SK-N-SH (cell line): ENCODE measurements at regions of chr16 and their contacts with region 1.

Region 1: DNA sequence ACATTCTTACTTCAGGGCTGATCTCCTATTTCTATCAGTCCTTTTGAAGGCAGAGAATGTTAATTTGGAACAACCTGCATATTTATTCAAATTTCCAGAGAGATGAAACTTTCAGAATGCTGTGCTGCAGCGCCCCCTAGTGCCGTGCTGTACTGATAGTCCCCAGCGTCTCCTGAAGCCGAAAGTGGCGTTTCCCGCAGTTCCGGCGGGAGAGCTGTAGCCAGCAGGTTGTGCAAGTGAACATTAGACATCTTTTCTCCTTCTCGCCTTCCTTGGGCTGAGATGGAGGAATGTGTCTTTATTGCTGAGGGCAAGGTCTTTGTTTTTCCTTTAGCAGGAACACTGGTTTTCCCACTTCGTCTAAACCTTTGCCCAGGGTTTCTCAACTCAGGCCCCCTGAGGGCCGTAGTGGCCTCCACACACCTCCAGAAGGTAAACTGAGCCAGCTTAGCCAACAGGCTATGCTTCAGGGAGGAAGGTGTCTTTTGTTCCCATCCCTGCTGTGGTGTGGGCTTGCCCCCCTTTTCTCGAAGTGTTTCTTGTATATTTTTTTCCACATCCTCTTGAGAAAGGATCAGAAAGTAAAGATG is 26.4 kb downstream of the USP10 start:
- DNase-seq: peak; percentile 68
- H3K4me3 ChIP-seq: peak overlapping the region in 1 of 2 experiments; percentile 45; a peak in 1 of 4 replicates
- H3K27ac ChIP-seq: no peak overlapping the region
- H3K4me1 ChIP-seq: peaks cover 28 to 34% of the 10 kb centered on the region in 2 experiments; a peak in 3 of 4 replicates
- H3K27me3 ChIP-seq: no peaks in the 10 kb centered on the region
- CTCF ChIP-seq: peak; percentile 97
- EP300 ChIP-seq: no peak
- RAD21 ChIP-seq: peak; percentile 88

Region 2: GRCh38 chr16:84504420-84505248 is 221.5 kb before region 1 on chr16 and contains the start of gene MEAK7:
- CTCF ChIA-PET with region 1: interaction called, 56 read pairs
- POLR2A ChIA-PET with region 1: no interaction called
- DNase-seq: peak; percentile 98
- H3K4me3 ChIP-seq: peak within 1 kb of the TSS; percentile 73 to 93
- H3K27ac ChIP-seq: peak within 1 kb of the TSS; percentile 67 to 82
- H3K4me1 ChIP-seq: peaks cover 14 to 18% of the 10 kb centered on the region in 2 experiments; a peak in 3 of 4 replicates
- H3K27me3 ChIP-seq: no peaks in the 10 kb centered on the region
- CTCF ChIP-seq: peak; percentile 19; the same call in 1 of the 2 replicates
- EP300 ChIP-seq: no peak
- RAD21 ChIP-seq: no peak
- polyA plus RNA-seq, gene MEAK7: 11.9 and 19.0 TPM in 2 replicates

Region 3: GRCh38 chr16:84537491-84538151 is 188.6 kb before region 1 on chr16:
- CTCF ChIA-PET with region 1: no interaction called
- POLR2A ChIA-PET with region 1: no interaction called
- DNase-seq: no peak
- H3K4me3 ChIP-seq: no peak overlapping the region
- H3K27ac ChIP-seq: peak overlapping the region in 1 of 2 experiments; percentile 45; a peak in 2 of 4 replicates
- H3K4me1 ChIP-seq: peaks cover 0 to 12% of the 10 kb centered on the region in 2 experiments; a peak in 2 of 4 replicates
- H3K27me3 ChIP-seq: no peaks in the 10 kb centered on the region
- CTCF ChIP-seq: no peak
- EP300 ChIP-seq: no peak
- RAD21 ChIP-seq: no peak

Region 4: DNA sequence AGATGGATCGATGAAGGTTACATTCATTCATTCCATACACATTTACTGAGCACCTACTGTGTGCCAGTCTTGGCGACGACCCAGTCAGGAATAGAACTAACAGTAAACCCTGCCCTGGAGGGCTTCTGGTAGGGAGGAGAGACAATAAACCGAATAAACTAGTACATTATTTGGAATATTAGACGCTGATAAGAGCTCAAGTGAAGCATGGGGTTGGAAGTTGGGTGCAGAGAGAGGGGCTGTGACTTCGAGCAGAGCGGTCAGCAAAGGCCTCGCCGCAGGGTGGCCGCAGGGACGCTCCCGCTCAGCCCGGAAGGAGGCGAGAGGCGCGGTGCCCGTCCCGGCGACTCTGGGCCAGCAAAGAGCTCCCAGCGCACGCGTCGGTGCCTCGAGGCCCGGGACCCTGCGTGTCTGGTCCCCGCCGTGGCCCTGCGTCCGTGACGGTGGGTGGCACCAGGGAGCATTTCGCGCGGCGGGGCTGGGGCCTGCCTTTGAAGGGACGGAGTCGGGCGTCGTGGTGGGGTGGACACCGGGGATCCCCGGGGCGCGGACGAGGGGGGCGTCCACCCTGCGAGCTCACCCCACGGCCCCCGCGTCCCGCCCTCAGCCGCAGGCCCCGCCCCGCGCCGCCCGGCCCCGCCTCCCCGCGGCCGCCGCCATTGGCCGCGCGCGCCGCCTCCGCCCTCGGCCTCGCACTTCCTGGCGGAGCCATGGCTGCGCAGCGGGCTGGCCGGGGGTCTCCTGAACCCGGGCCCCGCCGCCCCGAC is 78.2 kb before region 1 on chr16 and contains the start of gene KLHL36:
- CTCF ChIA-PET with region 1: interaction called, 16 read pairs
- POLR2A ChIA-PET with region 1: no interaction called
- DNase-seq: peak; percentile 96
- H3K4me3 ChIP-seq: peak within 1 kb of the TSS; percentile 65 to 74
- H3K27ac ChIP-seq: peak within 1 kb of the TSS; percentile 45 to 70
- H3K4me1 ChIP-seq: peaks cover 12 to 20% of the 10 kb centered on the region in 2 experiments; a peak in 2 of 4 replicates
- H3K27me3 ChIP-seq: no peaks in the 10 kb centered on the region
- CTCF ChIP-seq: no peak
- EP300 ChIP-seq: no peak
- RAD21 ChIP-seq: no peak
- polyA plus RNA-seq, gene KLHL36: 39.8 and 43.3 TPM in 2 replicates

Region 5: GRCh38 chr16:84672276-84673202 is 53.6 kb before region 1 on chr16:
- CTCF ChIA-PET with region 1: interaction called, 137 read pairs
- POLR2A ChIA-PET with region 1: no interaction called
- DNase-seq: peak; percentile 82
- H3K4me3 ChIP-seq: no peak overlapping the region
- H3K27ac ChIP-seq: no peak overlapping the region
- H3K4me1 ChIP-seq: peaks cover 0 to 9% of the 10 kb centered on the region in 2 experiments; a peak in 3 of 4 replicates
- H3K27me3 ChIP-seq: no peaks in the 10 kb centered on the region
- CTCF ChIP-seq: peak; percentile 95
- EP300 ChIP-seq: no peak
- RAD21 ChIP-seq: peak; percentile 68

Region 6: GRCh38 chr16:84699712-84700445 is 26.3 kb before region 1 on chr16 and contains the start of gene USP10:
- CTCF ChIA-PET with region 1: interaction called, 39 read pairs
- POLR2A ChIA-PET with region 1: no interaction called
- DNase-seq: peak; percentile 100
- H3K4me3 ChIP-seq: peak within 1 kb of the TSS; percentile 65 to 91
- H3K27ac ChIP-seq: peak within 1 kb of the TSS; percentile 58 to 71
- H3K4me1 ChIP-seq: peaks cover 7 to 15% of the 10 kb centered on the region in 2 experiments; a peak in 2 of 4 replicates
- H3K27me3 ChIP-seq: no peaks in the 10 kb centered on the region
- CTCF ChIP-seq: no peak
- EP300 ChIP-seq: no peak
- RAD21 ChIP-seq: no peak
- polyA plus RNA-seq, gene USP10: 41.6 and 49.2 TPM in 2 replicates

Region 7: GRCh38 chr16:84754353-84754856 is 28.2 kb after region 1 on chr16:
- CTCF ChIA-PET with region 1: interaction called, 18 read pairs
- POLR2A ChIA-PET with region 1: no interaction called
- DNase-seq: peak; percentile 62
- H3K4me3 ChIP-seq: peak overlapping the region in 1 of 2 experiments; percentile 4; a peak in 1 of 4 replicates
- H3K27ac ChIP-seq: no peak overlapping the region
- H3K4me1 ChIP-seq: no peaks in the 10 kb centered on the region; a peak in 1 of 4 replicates
- H3K27me3 ChIP-seq: no peaks in the 10 kb centered on the region
- CTCF ChIP-seq: peak; percentile 85
- EP300 ChIP-seq: no peak
- RAD21 ChIP-seq: peak; percentile 93

Region 8: GRCh38 chr16:84791088-84791487 is 64.9 kb after region 1 on chr16:
- CTCF ChIA-PET with region 1: no interaction called
- POLR2A ChIA-PET with region 1: no interaction called
- DNase-seq: no peak
- H3K4me3 ChIP-seq: no peak overlapping the region
- H3K27ac ChIP-seq: no peak overlapping the region
- H3K4me1 ChIP-seq: peaks cover 2 to 30% of the 10 kb centered on the region in 2 experiments; a peak in 3 of 4 replicates
- H3K27me3 ChIP-seq: no peaks in the 10 kb centered on the region
- CTCF ChIP-seq: no peak
- EP300 ChIP-seq: no peak
- RAD21 ChIP-seq: no peak

Region 9: GRCh38 chr16:84907575-84907974 is 181.4 kb after region 1 on chr16:
- CTCF ChIA-PET with region 1: no interaction called
- POLR2A ChIA-PET with region 1: no interaction called
- DNase-seq: no peak
- H3K4me3 ChIP-seq: no peak overlapping the region
- H3K27ac ChIP-seq: no peak overlapping the region
- H3K4me1 ChIP-seq: no peaks in the 10 kb centered on the region; a peak in 1 of 4 replicates
- H3K27me3 ChIP-seq: no peaks in the 10 kb centered on the region
- CTCF ChIP-seq: no peak
- EP300 ChIP-seq: no peak
- RAD21 ChIP-seq: no peak